Heart right ventricle (tissue), 16 donors: ENCODE measurements at regions of chr12 and their contacts with region 1.

Region 1: DNA sequence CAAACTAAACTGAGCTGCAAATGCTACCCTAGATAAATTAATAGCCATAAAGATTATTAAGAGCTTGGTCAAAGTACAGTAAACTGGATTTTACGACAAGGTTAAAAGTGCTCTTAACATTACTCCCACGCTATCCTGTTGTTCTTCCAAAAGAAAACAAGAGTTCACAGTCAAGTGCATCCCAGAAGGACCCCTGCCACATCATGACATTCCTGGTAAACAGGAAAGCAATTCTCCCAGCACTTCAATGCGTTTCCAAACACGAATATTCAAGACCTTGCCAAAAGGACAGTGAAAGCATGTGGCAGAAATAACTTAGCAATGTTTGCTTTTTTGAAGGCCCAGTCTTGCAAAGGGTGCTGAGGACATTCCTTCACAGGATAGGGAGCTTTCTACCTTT is 11.2 kb downstream of the SPRING1 start:
- DNase-seq: no peak
- ATAC-seq: peak in 2 of 8 donors; percentile 27 to 28
- H3K4me3 ChIP-seq: no peak overlapping the region
- H3K27ac ChIP-seq: no peak overlapping the region
- H3K4me1 ChIP-seq: peaks cover 0 to 26% (median 16%) of the 10 kb centered on the region in 9 donors
- H3K27me3 ChIP-seq: no peaks in the 10 kb centered on the region
- CTCF ChIP-seq: no peak

Region 2: DNA sequence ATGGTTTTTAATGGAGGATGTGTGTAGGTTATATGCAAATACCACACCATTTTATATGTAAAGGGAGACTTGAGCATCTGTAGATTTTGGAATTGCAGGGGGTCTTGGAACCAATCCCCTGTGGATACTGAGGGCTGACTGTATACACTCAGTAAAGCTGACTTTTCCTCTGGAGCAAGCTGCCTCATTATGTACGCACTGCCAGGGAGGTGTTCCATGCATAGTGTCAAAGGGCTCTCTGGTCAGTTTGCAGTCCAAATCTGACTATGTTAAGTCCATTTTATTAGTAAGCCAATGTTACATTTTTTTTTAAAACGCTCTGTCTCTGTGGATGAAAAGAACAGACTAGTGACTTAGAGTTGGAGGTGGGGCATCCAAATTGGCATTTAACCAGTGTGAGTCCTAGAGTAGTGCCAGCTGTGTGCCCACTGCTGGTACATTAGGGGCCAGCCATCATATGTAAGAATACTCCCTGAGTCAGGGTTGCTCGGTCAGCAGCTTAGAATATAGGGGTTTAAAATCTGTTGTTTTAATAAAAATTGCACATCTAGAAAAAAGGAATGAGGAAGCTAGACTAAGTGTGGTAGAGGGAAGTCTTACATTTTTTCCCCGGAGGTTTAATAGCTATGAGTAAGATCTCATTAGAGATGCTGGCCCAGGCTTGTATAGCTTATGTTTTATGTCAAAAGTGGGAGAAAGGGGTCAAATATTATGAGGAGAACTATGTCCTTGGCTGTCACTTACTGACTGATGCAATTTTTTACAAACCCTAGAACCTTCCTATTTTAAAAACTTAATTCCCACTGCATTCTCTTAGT is 285.5 kb after region 1 on chr12:
- intact Hi-C with region 1: loop called in 1 of 10 experiments (anchors 10 kb)
- DNase-seq: no peak
- ATAC-seq: peak in 2 of 8 donors; percentile 21 to 59
- H3K4me3 ChIP-seq: no peak overlapping the region
- H3K27ac ChIP-seq: no peak overlapping the region
- H3K4me1 ChIP-seq: peaks cover 0 to 17% (median 0%) of the 10 kb centered on the region in 9 donors
- H3K27me3 ChIP-seq: no peaks in the 10 kb centered on the region
- CTCF ChIP-seq: peak in 1 of 9 donors; percentile 12